PC-9 (cell line): ENCODE measurements at regions of chr5 and their contacts with region 1.

Region 1: DNA sequence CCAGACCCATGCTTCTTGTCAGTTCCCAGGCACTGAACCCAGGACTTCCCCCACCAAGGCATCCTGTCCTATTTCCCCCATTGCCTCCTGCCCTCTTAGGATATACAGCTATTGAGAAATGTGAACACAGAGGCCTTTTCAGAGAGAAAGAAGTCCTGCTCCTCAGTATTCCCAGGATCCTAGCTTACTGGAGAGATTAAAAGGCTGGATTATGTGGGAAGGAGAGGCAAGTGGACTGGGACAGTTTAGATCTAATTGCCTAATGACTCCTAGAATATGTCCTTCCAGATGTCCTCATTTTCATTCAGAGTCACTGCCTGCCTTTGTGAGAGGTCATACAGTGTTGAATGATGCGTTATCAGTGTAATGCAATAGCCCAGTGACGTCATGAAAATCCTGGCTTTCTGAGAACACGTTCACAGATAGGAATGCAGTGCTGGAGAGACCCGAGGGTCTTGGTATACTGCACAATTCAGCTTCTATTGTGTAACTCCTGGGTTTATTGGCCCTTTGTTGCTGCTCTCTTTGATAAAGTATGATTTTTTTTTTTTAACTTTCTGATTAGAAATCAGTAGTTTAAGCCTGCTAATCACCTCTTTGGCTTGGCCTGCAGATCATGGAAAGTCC is 26.2 kb downstream of the WWC1 start:
- DNase-seq: peak; percentile 74 to 96
- H3K4me3 ChIP-seq: no peak overlapping the region
- H3K27ac ChIP-seq: peak overlapping the region; percentile 85
- H3K4me1 ChIP-seq: peaks cover 78% of the 10 kb centered on the region
- H3K27me3 ChIP-seq: no peaks in the 10 kb centered on the region
- CTCF ChIP-seq: no peak

Region 2: GRCh38 chr5:168114444-168115017 is 203.1 kb before region 1 on chr5:
- CTCF ChIA-PET with region 1: no interaction called
- POLR2A ChIA-PET with region 1: no interaction called
- intact Hi-C with region 1: no loop called
- DNase-seq: peak; percentile 36 to 50
- H3K4me3 ChIP-seq: no peak overlapping the region
- H3K27ac ChIP-seq: no peak overlapping the region
- H3K4me1 ChIP-seq: no peaks in the 10 kb centered on the region
- H3K27me3 ChIP-seq: peaks cover 63% of the 10 kb centered on the region
- CTCF ChIP-seq: peak; percentile 70

Region 3: DNA sequence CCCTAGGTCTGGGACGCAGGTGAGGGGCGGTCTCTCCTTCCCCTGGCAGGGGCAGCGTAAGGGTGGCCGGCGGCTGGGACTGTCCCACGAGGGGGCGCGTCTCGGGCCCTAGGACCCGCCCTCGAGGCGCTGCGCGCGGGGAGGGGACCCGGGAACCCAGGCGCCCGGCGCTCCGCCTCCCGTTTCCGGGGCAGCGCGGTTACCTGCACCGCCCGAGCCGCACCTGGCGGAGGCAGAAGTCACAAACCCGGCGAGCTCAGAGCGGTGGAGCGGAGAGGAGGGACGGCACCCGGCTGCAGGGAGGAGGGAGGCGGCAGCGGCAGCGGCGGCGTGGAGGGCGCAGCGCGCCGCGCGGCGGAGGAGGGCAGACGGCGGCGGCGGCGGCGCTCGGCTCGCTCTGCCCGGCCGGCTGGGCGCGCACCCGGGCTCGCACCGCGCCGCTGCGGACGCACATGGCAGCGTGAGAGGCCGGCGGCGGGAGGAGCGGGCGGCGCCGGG is 26.1 kb before region 1 on chr5 and contains the start of gene WWC1:
- CTCF ChIA-PET with region 1: interaction called, 5 read pairs
- POLR2A ChIA-PET with region 1: interaction called, 6 read pairs
- intact Hi-C with region 1: loop called (anchors 1 kb)
- DNase-seq: peak; percentile 82 to 99
- H3K4me3 ChIP-seq: peak within 1 kb of the TSS; percentile 63
- H3K27ac ChIP-seq: peak within 1 kb of the TSS; percentile 91
- H3K4me1 ChIP-seq: peaks cover 76% of the 10 kb centered on the region
- H3K27me3 ChIP-seq: no peaks in the 10 kb centered on the region
- CTCF ChIP-seq: peak; percentile 68
- total RNA-seq, gene WWC1: 79.5 and 97.7 TPM in 2 replicates

Region 4: DNA sequence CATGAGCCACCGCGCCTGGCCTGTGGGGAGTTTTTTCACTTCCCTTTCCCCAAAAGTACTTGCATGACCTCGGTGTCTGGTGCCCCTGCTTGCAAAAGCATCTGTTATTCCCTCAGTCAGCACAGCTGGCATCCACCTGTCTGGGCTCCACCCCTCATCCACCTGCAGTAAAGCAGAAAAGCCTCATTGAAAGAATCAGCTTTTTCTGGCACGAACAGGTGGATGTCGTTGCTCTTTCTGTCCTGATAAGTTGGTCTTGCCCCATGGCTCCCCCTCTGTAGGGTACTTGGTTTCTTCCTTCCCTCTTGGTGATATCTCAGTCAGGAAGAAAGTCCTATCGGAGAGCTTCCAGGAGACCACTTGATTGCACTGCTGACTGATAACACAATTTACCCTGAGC is 11.2 kb after region 1 on chr5:
- CTCF ChIA-PET with region 1: no interaction called
- POLR2A ChIA-PET with region 1: interaction called, 18 read pairs
- intact Hi-C with region 1: loop called (anchors 1 kb)
- DNase-seq: peak in 1 of 2 experiments; percentile 65
- H3K4me3 ChIP-seq: peak overlapping the region; percentile 39; the same call in 1 of the 2 replicates
- H3K27ac ChIP-seq: peak overlapping the region; percentile 78
- H3K4me1 ChIP-seq: peaks cover 99% of the 10 kb centered on the region
- H3K27me3 ChIP-seq: no peaks in the 10 kb centered on the region
- CTCF ChIP-seq: no peak

Region 5: GRCh38 chr5:168346441-168346840 is 28.8 kb after region 1 on chr5:
- CTCF ChIA-PET with region 1: interaction called, 7 read pairs
- POLR2A ChIA-PET with region 1: interaction called, 6 read pairs
- intact Hi-C with region 1: loop called (anchors 1 kb)
- DNase-seq: peak; percentile 68 to 96
- H3K4me3 ChIP-seq: peak overlapping the region; percentile 27; the same call in 1 of the 2 replicates
- H3K27ac ChIP-seq: peak overlapping the region; percentile 71
- H3K4me1 ChIP-seq: peaks cover 83% of the 10 kb centered on the region
- H3K27me3 ChIP-seq: no peaks in the 10 kb centered on the region
- CTCF ChIP-seq: no peak

Region 6: DNA sequence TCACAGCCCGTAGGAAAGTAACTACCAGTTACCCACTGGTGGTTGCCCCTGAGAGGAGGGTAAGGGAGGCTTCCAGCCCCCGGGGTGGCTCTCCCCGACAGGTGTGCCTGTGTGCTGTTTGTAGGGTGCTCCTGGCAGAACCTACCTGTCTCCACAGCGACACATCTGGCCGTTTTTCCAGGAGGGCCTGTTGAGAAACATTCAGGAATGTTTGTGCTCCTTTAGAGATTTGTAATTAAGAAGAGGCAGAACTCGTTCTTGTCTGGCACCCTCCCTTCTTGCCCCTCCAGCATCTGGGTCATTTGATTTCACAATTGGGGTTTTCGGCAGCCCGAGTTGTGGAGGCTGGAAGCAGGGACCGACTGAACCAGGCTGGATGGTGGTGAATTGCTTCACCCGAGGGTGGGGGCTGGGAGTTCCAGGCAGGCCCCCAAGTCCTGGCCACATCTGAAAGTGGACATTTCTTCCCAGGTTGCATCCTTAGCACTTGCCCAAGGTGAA is 48.0 kb after region 1 on chr5:
- CTCF ChIA-PET with region 1: interaction called, 5 read pairs
- POLR2A ChIA-PET with region 1: interaction called, 4 read pairs
- intact Hi-C with region 1: loop called (anchors 1 kb)
- DNase-seq: peak; percentile 88 to 98
- H3K4me3 ChIP-seq: peak overlapping the region; percentile 38; the same call in 1 of the 2 replicates
- H3K27ac ChIP-seq: peak overlapping the region; percentile 97
- H3K4me1 ChIP-seq: peaks cover 76% of the 10 kb centered on the region
- H3K27me3 ChIP-seq: no peaks in the 10 kb centered on the region
- CTCF ChIP-seq: peak; percentile 69

Region 7: DNA sequence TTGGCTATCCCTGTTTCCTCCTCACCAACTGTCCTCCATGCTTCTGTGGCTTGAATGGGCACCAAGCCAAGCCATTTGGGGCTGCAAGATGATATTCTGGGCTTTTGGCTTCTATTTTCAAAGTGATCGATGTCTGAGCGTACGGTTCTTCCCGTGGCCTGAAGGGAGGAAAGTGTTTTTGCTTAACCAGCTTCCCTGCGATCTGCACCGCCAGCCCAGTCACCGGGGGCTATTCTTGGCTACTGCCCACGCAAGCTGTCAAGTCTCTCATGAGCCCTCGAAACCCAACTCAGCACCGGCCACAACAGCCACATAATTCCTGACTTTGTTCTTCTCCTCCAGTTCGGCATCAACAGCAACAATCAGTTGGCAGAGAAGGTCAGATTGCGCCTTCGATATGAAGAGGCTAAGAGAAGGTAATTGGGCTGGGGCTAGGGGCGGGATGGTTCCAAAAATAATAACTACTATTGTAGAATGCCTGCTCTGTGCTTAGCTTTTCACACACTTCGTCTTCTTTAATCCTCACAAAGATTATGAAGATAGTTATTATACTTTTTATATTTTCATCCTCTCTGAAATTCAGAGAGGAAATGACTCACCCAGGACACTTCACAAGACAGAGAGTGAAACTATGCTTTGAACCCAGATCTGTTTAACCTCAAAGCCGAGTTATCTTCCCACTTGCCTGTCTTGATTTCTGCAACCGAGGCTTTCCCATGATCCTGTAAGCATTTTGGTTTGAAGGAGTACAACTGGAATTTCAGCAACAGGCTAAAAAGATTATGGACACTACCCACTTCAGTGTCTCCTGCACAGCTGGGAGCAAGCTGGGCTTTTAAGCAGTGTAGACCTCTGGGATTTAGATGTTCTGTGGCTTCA is 92.2 kb after region 1 on chr5:
- CTCF ChIA-PET with region 1: no interaction called
- POLR2A ChIA-PET with region 1: interaction called, 16 read pairs
- intact Hi-C with region 1: no loop called
- DNase-seq: peak; percentile 47
- H3K4me3 ChIP-seq: no peak overlapping the region
- H3K27ac ChIP-seq: peak overlapping the region; percentile 61
- H3K4me1 ChIP-seq: peaks cover 25% of the 10 kb centered on the region
- H3K27me3 ChIP-seq: no peaks in the 10 kb centered on the region
- CTCF ChIP-seq: no peak